Calu3 (cell line): ENCODE measurements at regions of chr3 and their contacts with region 1.

Region 1: DNA sequence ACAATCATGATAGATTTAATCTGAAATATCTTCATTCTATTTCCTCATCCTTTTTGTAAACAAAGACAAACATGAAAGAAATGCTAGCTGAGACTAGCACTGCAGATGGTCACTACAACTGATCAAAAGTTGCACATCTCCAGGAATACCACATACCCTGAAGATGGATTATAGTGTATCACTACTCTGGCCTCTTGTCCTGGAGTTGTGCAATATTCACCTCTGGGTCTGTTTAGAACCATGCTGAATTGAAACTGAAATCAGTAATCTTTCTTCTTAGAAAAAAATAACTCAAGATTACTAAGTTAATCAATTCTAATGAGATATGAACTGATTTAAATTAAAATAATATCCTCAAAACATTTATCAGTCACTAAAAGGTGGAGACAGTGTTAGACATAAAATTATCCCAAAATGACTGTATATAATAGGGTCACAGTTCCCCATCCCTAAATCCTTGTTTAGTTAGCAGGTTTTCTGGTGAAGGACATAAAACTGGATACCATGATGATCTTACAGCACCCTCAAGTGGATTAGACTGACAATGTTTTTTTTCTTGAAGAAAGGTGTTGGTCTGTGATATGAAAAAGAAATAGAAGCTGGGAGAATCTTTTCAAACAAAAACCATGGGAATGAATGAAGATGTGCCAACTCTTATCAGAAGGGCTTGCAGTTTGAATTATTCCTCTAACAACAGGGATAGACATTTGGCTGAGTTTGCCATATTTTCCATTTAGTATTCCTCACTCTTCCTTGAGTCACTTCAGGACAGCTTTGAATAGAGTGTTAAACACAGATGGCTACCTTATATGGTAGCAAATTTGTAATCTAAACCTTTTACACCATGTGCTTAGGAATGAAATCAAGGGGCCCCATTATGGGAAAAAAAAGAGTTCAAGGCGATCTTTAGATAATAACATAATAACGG is 7.1 kb upstream of the TTC14 start:
- DNase-seq: no peak
- H3K4me3 Mint-ChIP-seq: no peak overlapping the region
- H3K27ac Mint-ChIP-seq: no peak overlapping the region
- H3K4me1 Mint-ChIP-seq: peaks cover 16% of the 10 kb centered on the region
- H3K27me3 Mint-ChIP-seq: no peaks in the 10 kb centered on the region
- CTCF ChIP-seq: peak; percentile 79

Region 2: GRCh38 chr3:179750720-179751328 is 844.1 kb before region 1 on chr3:
- CTCF ChIA-PET with region 1: interaction called, 3 read pairs
- intact Hi-C with region 1: loop called (anchors 5 kb)
- DNase-seq: peak; percentile 27
- H3K4me3 Mint-ChIP-seq: no peak overlapping the region
- H3K27ac Mint-ChIP-seq: no peak overlapping the region
- H3K4me1 Mint-ChIP-seq: no peaks in the 10 kb centered on the region
- H3K27me3 Mint-ChIP-seq: no peaks in the 10 kb centered on the region
- CTCF ChIP-seq: peak; percentile 79

Region 3: DNA sequence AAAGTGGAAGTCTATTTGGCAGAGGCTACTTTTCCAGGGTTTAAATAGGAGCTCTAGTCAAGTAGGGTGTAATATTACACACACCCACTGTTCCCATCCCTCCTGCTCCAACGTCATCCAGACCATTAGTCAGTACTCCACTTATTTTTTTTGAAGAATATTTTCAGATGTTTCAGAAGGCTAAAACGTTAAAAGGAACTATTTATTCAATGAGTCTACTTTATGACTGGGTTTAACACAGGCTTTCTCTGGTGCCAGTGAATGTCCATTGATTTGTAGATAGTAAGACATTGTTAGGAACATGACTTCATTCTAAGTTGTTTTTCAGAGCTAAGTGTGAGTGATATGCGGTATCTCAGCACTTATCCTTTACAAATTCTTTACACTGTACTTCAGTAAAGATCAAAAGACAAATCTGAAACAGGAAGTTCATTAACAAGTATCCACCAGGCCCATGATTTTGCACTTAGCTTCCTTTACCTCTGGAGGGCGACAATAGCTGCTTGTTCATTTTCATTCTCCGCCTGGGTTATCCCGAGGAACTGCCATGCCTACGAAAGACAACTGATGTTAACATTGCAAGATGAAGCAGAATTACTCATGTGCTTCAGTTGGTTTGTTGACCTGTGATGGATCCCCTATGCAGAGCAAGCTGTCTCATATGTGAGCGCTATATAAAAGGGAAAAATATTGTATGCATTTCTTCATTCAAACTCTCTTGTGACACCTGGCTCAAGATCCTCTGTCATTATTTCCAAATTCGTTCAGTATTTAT is 783.4 kb before region 1 on chr3:
- CTCF ChIA-PET with region 1: interaction called, 26 read pairs
- intact Hi-C with region 1: loop called (anchors 1 kb)
- DNase-seq: peak; percentile 77
- H3K4me3 Mint-ChIP-seq: no peak overlapping the region
- H3K27ac Mint-ChIP-seq: peak overlapping the region; percentile 30
- H3K4me1 Mint-ChIP-seq: peaks cover 11% of the 10 kb centered on the region
- H3K27me3 Mint-ChIP-seq: no peaks in the 10 kb centered on the region
- CTCF ChIP-seq: peak; percentile 85

Region 4: GRCh38 chr3:180048103-180048502 is 546.8 kb before region 1 on chr3:
- CTCF ChIA-PET with region 1: no interaction called
- intact Hi-C with region 1: loop called (anchors 2 kb)
- DNase-seq: no peak
- H3K4me3 Mint-ChIP-seq: no peak overlapping the region
- H3K27ac Mint-ChIP-seq: no peak overlapping the region
- H3K4me1 Mint-ChIP-seq: peaks cover 23% of the 10 kb centered on the region
- H3K27me3 Mint-ChIP-seq: peaks cover 30% of the 10 kb centered on the region
- CTCF ChIP-seq: no peak

Region 5: DNA sequence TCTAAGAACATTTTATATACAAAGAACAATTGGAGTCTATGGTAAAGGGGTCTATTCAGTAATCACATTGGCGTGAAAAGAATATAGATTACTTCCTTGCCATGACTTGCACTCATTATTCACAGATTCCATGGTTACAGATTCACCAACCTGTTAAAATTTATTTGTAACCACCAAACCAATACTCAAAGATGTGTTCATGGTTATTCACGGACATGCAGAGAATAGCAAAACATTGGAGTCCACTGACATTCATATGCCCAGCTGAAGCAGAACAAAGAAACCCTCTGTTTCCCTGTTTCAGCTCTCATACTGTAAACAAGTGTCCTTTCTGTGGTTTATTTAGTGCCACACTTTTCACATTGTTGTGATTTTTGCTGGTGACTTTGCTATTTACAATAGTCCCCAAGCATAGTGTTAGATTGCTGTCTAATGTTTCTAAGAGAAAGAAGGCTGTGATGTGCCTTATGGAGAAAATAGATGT is 178.7 kb before region 1 on chr3:
- CTCF ChIA-PET with region 1: no interaction called
- intact Hi-C with region 1: loop called (anchors 2 kb)
- DNase-seq: peak; percentile 68
- H3K4me3 Mint-ChIP-seq: peak overlapping the region; percentile 45
- H3K27ac Mint-ChIP-seq: peak overlapping the region; percentile 99
- H3K4me1 Mint-ChIP-seq: peaks cover 81% of the 10 kb centered on the region
- H3K27me3 Mint-ChIP-seq: no peaks in the 10 kb centered on the region
- CTCF ChIP-seq: no peak

Region 6: DNA sequence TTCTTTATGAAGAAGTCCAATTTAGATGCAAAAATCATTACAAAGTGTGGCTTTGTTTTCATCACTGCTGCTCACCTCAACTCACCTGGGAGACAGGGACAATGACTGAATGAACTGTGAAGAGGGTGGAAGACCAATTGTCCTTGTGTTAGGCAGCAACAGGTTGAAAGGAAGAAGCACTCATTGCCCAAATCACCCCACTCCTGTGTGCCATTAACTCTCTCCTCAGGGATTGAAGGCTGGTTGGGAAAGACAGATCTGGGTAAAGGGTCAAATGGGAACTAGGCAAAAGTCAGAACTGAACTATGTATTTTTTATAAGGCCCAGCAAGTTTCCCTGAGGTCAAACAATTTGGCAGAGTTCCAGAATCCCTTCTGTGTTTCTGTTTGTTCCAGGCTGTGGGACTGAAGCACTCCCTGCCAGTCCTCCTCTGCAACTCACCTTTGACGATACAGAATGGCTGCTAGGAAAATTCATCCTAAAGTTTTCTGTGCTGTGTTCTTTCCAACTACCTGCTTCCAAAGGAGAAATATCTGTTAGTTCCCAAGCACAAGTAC is 153.0 kb after region 1 on chr3:
- CTCF ChIA-PET with region 1: no interaction called
- intact Hi-C with region 1: no loop called
- DNase-seq: no peak
- H3K4me3 Mint-ChIP-seq: no peak overlapping the region
- H3K27ac Mint-ChIP-seq: no peak overlapping the region
- H3K4me1 Mint-ChIP-seq: peaks cover 8% of the 10 kb centered on the region
- H3K27me3 Mint-ChIP-seq: no peaks in the 10 kb centered on the region
- CTCF ChIP-seq: no peak

Region 7: DNA sequence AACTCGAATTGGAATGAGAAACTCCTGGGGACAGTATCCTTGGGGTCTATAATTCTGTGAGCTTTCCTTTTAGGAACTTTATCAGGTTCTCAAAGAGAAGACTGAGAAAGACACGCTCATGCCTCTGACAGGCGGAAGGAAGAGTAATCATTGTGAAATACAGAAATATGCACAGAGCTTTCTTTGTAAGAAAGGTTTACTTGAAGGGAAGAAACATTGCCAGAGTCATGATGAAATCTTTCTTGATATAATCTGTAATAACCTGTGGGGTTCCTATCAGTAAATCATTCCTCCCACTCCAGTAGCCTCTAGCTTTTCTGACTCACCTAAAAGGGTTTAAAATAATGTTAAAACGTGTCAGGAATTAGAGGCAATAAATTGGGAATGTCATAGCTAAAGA is 168.0 kb after region 1 on chr3:
- CTCF ChIA-PET with region 1: no interaction called
- intact Hi-C with region 1: no loop called
- DNase-seq: no peak
- H3K4me3 Mint-ChIP-seq: peak overlapping the region; percentile 49
- H3K27ac Mint-ChIP-seq: peak overlapping the region; percentile 6
- H3K4me1 Mint-ChIP-seq: peaks cover 18% of the 10 kb centered on the region
- H3K27me3 Mint-ChIP-seq: no peaks in the 10 kb centered on the region
- CTCF ChIP-seq: no peak